ENCODE measurements at regions of chr1 and their contacts with region 1.

Region 1: DNA sequence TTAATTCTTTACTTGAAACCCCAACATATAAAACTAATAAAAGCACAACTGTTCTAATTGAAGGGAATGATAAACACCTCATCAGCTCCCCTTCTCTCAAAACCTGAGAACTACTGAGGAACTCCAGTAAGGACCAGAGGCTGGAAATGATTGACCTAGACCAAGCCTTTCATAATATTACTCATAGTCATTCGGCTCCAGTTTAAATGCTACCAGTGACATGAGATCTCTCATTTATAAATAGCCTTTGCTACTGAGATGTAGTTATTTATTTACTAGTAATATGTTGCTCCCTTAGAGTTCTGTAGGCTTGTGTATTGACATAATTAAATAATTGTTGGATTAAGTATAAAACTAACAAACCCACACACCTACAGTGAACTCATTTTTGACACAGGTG is 209.8 kb upstream of the PRMT6 start:
- DNase-seq: no peak
- ATAC-seq: no peak
- H3K4me3 ChIP-seq: no peak overlapping the region
- H3K27ac ChIP-seq: no peak overlapping the region
- H3K4me1 ChIP-seq: no peaks in the 10 kb centered on the region
- H3K27me3 ChIP-seq: no peaks in the 10 kb centered on the region
- CTCF ChIP-seq: no peak
- POLR2A ChIP-seq: no peak

Region 2: DNA sequence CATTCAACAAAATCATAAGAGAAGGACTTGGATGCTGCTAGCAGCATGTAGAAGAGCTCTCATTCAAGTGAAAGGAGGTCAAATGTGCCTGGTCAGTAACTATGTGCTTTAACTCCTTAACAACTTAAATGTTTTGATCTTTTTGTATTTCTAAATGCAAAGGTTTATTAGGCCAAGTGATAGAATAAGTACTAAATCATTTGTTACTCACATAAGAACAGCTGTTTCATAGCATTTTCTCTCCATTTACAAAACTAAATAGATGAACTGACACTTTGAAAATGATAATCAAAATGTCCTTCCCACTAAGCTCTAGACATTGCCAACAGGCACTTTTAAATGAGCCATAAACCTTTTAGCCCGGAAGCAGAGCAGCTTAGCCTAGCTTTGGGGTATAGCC is 44.5 kb before region 1 on chr1:
- in situ Hi-C with region 1: no loop called
- intact Hi-C with region 1: loop called (anchors 1 kb)
- DNase-seq: no peak
- ATAC-seq: no peak
- H3K4me3 ChIP-seq: no peak overlapping the region
- H3K27ac ChIP-seq: no peak overlapping the region
- H3K4me1 ChIP-seq: no peaks in the 10 kb centered on the region
- H3K27me3 ChIP-seq: no peaks in the 10 kb centered on the region
- CTCF ChIP-seq: no peak
- POLR2A ChIP-seq: no peak